H1 (cell line): ENCODE measurements at regions of chr9 and their contacts with region 1.

Region 1: DNA sequence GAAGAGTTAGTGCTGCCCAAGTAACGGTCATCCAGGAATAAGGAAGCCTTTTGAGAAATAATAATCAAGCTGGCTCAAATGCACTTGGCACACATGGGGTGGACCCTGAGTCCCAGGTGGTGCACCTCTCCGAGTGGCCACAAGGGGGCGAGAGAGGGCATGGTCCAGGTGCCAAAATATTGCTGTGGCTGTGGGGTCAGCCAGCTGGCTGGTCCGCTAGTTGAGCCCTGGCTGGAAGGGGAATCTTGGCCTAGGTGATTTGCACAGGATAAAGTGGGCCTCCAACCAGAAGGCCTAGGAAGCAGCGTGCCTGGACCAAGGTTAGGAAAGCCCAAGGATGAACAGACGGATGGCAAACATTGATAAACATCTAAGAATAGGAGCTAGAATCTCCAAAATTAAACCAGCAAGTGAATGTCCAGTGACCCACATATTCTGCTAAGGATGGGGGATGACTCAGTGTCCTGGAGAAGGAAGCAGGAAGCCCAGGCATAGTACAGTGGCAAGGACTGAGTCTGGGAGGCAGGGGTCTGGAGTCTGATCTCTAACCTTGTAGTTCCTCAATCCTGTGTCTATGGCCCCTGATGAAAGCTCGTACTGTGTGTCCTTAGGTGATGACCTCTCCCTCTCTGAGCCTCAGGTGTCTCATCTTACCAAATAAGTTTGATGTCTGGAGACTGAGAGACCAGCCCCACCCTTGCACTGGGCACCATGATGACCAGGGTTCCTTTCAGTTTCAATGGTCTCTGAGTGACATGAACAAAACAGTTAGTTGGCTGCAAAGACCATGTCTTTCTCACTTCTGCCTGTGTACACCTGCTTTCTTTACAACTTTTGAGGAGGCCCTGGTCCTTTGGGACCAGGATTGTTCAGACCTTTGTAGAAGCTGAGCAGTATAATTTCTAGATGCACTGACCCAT is 19.2 kb upstream of the SHB start:
- DNase-seq: peak; percentile 33 to 99
- H3K4me3 ChIP-seq: no peak overlapping the region
- H3K27ac ChIP-seq: no peak overlapping the region
- H3K4me1 ChIP-seq: peaks cover 0 to 6% (median 4%) of the 10 kb centered on the region in 4 experiments; a peak in 6 of 7 replicates
- H3K27me3 ChIP-seq: no peaks in the 10 kb centered on the region; a peak in 1 of 7 replicates
- CTCF ChIP-seq: peak; percentile 90 to 98 (median 97)
- EP300 ChIP-seq: no peak
- POLR2A ChIP-seq: no peak
- RAD21 ChIP-seq: peak; percentile 85 to 92

Region 2: DNA sequence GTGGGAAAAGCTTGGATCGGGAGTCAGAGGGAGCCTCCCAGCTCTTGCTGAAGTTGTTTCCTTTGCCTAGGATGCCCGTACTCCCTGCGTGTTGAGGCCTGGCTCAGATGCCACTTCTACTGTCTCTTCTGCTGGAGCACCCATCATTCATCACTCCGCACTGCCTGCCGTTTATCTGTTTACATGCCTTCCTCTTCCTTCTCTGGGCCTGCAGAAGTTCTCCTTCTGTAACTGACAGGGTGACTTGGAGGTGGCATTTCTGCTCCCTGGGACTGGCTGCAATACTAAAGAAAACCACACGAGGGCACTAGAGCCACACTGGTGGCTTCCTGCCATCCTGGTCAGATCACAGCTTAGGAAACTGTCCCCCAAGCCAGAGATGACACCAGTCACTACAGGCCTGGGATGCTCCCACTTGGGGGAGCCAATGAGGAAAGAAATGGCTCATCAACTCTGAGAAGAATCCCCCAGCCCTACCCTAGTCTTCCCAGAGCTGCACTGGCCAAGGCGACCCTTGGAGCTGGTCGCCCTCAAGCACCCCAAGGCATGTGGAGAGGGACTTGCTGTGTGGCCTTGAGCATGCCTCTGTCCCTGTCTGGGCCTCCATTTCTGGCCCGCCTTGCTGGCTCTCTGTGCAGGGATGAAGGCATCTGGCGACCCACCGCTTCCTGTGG is 174.6 kb before region 1 on chr9:
- CTCF ChIA-PET with region 1: interaction called, 30 read pairs
- POLR2A ChIA-PET with region 1: no interaction called
- DNase-seq: peak; percentile 82 to 99
- H3K4me3 ChIP-seq: no peak overlapping the region
- H3K27ac ChIP-seq: no peak overlapping the region
- H3K4me1 ChIP-seq: no peaks in the 10 kb centered on the region
- H3K27me3 ChIP-seq: no peaks in the 10 kb centered on the region
- CTCF ChIP-seq: peak; percentile 78 to 99 (median 98)
- EP300 ChIP-seq: no peak
- POLR2A ChIP-seq: no peak
- RAD21 ChIP-seq: peak; percentile 100

Region 3: GRCh38 chr9:38026021-38026809 is 62.1 kb before region 1 on chr9:
- CTCF ChIA-PET with region 1: interaction called, 13 read pairs
- POLR2A ChIA-PET with region 1: no interaction called
- DNase-seq: no peak
- H3K4me3 ChIP-seq: no peak overlapping the region
- H3K27ac ChIP-seq: no peak overlapping the region
- H3K4me1 ChIP-seq: peaks cover 34 to 54% (median 40%) of the 10 kb centered on the region in 4 experiments
- H3K27me3 ChIP-seq: no peaks in the 10 kb centered on the region
- CTCF ChIP-seq: no peak
- EP300 ChIP-seq: no peak
- POLR2A ChIP-seq: no peak
- RAD21 ChIP-seq: no peak

Region 4: GRCh38 chr9:38061326-38061977 is 26.8 kb before region 1 on chr9:
- CTCF ChIA-PET with region 1: interaction called, 16 read pairs
- POLR2A ChIA-PET with region 1: interaction called, 3 read pairs
- DNase-seq: no peak
- H3K4me3 ChIP-seq: no peak overlapping the region
- H3K27ac ChIP-seq: no peak overlapping the region
- H3K4me1 ChIP-seq: peaks cover 15 to 31% (median 23%) of the 10 kb centered on the region in 4 experiments
- H3K27me3 ChIP-seq: peaks cover 0 to 1% (median 0%) of the 10 kb centered on the region in 4 experiments; a peak in 2 of 7 replicates
- CTCF ChIP-seq: no peak
- EP300 ChIP-seq: no peak
- POLR2A ChIP-seq: no peak
- RAD21 ChIP-seq: no peak

Region 5: DNA sequence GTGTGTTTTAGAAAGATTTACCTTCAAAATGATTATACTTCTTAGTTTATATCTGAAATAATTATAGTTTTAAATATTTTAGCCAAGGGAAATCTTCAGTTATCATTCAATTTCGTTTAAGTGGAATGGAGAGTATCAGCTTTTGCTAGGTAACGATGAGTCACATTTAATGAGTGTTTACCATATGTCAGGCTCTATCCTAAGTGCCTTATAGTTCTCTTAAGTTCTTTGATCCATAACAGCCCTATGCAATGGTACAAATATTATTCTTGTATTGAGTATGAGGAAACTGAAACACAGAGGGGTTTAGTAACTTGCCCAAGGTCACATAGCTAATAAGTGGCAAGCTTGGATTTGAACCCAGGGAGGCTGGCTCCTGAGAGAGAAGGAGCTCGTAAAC is 18.2 kb after region 1 on chr9:
- CTCF ChIA-PET with region 1: interaction called, 11 read pairs
- POLR2A ChIA-PET with region 1: no interaction called
- DNase-seq: no peak
- H3K4me3 ChIP-seq: no peak overlapping the region
- H3K27ac ChIP-seq: no peak overlapping the region
- H3K4me1 ChIP-seq: no peaks in the 10 kb centered on the region; a peak in 1 of 7 replicates
- H3K27me3 ChIP-seq: no peaks in the 10 kb centered on the region; a peak in 1 of 7 replicates
- CTCF ChIP-seq: no peak
- EP300 ChIP-seq: no peak
- POLR2A ChIP-seq: no peak
- RAD21 ChIP-seq: no peak

Region 6: GRCh38 chr9:38141746-38142591 is 53.7 kb after region 1 on chr9:
- CTCF ChIA-PET with region 1: interaction called, 14 read pairs
- POLR2A ChIA-PET with region 1: no interaction called
- DNase-seq: no peak
- H3K4me3 ChIP-seq: no peak overlapping the region
- H3K27ac ChIP-seq: no peak overlapping the region
- H3K4me1 ChIP-seq: peaks cover 0 to 6% (median 3%) of the 10 kb centered on the region in 4 experiments; a peak in 2 of 7 replicates
- H3K27me3 ChIP-seq: peaks cover 0 to 6% (median 2%) of the 10 kb centered on the region in 4 experiments; a peak in 2 of 7 replicates
- CTCF ChIP-seq: no peak
- EP300 ChIP-seq: no peak
- POLR2A ChIP-seq: no peak
- RAD21 ChIP-seq: no peak

Region 7: GRCh38 chr9:38362852-38363593 is 274.8 kb after region 1 on chr9:
- CTCF ChIA-PET with region 1: interaction called, 25 read pairs
- POLR2A ChIA-PET with region 1: no interaction called
- DNase-seq: no peak
- H3K4me3 ChIP-seq: no peak overlapping the region
- H3K27ac ChIP-seq: no peak overlapping the region
- H3K4me1 ChIP-seq: peaks cover 0 to 4% (median 0%) of the 10 kb centered on the region in 4 experiments; a peak in 1 of 7 replicates
- H3K27me3 ChIP-seq: no peaks in the 10 kb centered on the region
- CTCF ChIP-seq: peak; percentile 7 to 62 (median 60)
- EP300 ChIP-seq: no peak
- POLR2A ChIP-seq: no peak
- RAD21 ChIP-seq: peak; percentile 87 to 89